Calu3 (cell line): ENCODE measurements at regions of chr12 and their contacts with region 1.

Region 1: GRCh38 chr12:69388371-69388770 is 28.8 kb downstream of the YEATS4 start:
- DNase-seq: no peak
- H3K4me3 Mint-ChIP-seq: no peak overlapping the region
- H3K27ac Mint-ChIP-seq: no peak overlapping the region
- H3K4me1 Mint-ChIP-seq: peaks cover 7% of the 10 kb centered on the region
- H3K27me3 Mint-ChIP-seq: no peaks in the 10 kb centered on the region
- CTCF ChIP-seq: peak; percentile 34

Region 2: DNA sequence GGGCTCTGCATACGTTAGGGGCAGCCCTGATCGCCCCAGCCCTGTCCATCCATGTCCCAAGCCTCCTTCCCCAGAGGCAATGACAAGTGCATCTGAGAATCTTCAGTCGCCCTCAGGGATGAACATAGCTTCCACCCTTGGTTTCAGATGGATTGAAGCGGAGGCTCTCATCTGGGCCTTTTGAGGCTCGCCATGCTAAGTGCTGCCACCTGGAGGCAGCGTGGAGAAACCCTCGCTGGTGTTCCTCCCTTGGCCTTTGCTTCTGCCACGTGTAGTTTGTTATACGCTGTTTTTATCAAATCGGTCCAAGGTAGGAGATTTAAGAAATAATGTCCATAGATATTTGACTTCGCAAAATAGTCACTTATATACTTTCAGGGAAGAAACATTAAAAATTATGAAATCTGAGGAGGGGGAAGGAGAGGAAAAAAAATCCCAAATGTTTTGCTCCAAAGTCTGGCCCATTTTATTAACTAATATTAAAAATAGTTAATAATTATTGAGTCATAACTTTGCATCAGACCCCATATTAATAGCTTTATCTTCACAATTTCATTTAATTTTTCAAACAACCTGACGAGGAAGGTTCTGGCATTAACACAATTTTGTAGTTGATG is 251.1 kb after region 1 on chr12:
- CTCF ChIA-PET with region 1: no interaction called
- intact Hi-C with region 1: loop called (anchors 1 kb)
- DNase-seq: peak; percentile 75
- H3K4me3 Mint-ChIP-seq: no peak overlapping the region
- H3K27ac Mint-ChIP-seq: no peak overlapping the region
- H3K4me1 Mint-ChIP-seq: no peaks in the 10 kb centered on the region
- H3K27me3 Mint-ChIP-seq: no peaks in the 10 kb centered on the region
- CTCF ChIP-seq: peak; percentile 79